ENCODE measurements at regions of chr3 and their contacts with region 1.

Region 1: DNA sequence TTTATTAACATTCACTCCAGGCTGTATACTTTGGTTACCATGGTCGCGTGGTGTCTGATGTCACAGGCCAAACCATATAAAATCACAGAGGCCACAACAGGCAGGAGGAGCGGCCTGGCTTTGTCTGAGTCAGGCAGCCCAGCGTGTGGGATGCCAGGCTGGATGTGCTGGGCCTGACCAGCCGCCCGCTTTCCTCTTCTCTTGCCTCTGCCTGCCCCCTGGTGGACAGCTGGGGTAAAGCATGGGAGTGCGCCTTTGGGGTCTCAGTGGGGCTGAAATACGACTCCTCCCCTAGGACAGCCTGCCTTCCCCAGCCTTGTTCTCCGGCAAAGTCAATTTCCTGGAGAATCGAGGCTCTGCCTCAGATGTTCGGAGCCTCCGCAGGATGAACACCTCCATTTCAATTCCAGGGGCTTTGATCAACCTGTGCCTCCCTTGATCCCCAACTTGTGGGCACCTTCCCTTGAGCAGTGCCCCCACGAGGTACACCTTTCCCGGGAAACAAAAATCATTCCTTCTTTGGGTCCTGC is 78.2 kb downstream of the CCNL1 start:
- DNase-seq: peak; percentile 83
- H3K27ac ChIP-seq: peak overlapping the region; percentile 98
- CTCF ChIP-seq: peak; percentile 91

Region 2: GRCh38 chr3:156674046-156674910 is 407.5 kb before region 1 on chr3 and contains the start of gene TIPARP:
- CTCF ChIA-PET with region 1: interaction called, 28 read pairs
- POLR2A ChIA-PET with region 1: no interaction called
- DNase-seq: peak; percentile 95
- H3K27ac ChIP-seq: peak within 1 kb of the TSS; percentile 96
- CTCF ChIP-seq: peak; percentile 83

Region 3: DNA sequence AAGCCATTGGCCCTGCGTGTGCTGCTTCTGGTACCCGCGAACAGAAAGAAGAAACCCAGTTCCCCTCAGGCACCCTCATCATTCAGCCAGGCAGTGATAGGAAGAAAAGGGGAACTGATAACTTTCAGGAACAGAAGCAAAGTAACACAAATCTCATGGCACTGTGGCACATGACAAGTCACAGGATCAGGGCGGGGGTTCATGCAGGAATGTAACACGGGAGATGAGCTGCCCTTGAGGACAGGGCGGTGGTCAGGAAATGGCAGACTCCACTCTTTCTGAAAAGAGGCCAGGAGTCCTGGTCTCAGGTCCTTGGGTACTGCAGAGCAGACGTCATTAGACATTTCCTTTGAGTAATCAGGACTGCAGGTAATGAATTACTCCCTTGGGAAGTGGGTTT is 17.3 kb before region 1 on chr3:
- CTCF ChIA-PET with region 1: no interaction called
- POLR2A ChIA-PET with region 1: no interaction called
- DNase-seq: no peak
- H3K27ac ChIP-seq: no peak overlapping the region
- CTCF ChIP-seq: no peak

Region 4: GRCh38 chr3:157136647-157137387 is 55.1 kb after region 1 on chr3:
- CTCF ChIA-PET with region 1: interaction called, 16 read pairs
- POLR2A ChIA-PET with region 1: no interaction called
- DNase-seq: no peak
- H3K27ac ChIP-seq: peak overlapping the region; percentile 75
- CTCF ChIP-seq: no peak

Measured in RWPE1 (cell line).